SK-N-SH (cell line): ENCODE measurements at regions of chr4 and their contacts with region 1.

Region 1: DNA sequence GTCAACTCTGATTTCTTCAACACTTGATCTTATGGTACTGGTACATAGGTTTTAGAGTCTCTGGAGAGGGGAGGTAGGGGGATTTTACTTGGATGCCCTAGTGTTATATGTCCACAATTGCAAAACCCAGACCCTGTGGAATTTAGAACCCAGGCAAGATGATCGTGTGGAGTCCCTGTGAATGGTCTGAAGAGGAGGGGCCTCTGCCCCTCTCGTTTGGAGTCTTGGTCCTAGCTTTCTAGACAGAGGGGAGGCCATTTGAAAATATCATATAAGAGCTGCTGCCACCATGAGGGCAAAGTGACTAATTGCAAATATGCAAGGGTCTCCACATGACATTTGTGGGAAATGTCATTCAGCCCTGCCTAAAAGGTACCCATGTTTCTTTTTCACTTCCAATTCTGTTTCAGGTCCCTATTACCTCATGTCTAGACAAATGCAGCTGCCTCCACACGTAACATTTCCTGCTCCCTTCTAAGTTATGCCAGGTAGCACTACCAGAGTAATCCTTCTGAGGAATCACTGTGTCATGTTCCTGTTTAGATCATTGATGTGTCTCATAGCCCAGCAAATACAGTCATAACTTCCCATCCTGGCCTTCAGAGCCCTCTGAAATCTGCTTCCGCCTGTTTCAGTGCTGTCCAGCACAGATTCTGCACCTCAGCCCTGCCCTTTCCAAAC is 126.8 kb downstream of the KLHL8 start:
- DNase-seq: peak; percentile 67
- H3K4me3 ChIP-seq: no peak overlapping the region
- H3K27ac ChIP-seq: peak overlapping the region in 1 of 2 experiments; percentile 47; a peak in 2 of 4 replicates
- H3K4me1 ChIP-seq: peaks cover 9 to 10% of the 10 kb centered on the region in 2 experiments; a peak in 3 of 4 replicates
- H3K27me3 ChIP-seq: no peaks in the 10 kb centered on the region
- CTCF ChIP-seq: peak; percentile 71
- EP300 ChIP-seq: no peak
- RAD21 ChIP-seq: peak; percentile 88

Region 2: GRCh38 chr4:86497980-86498862 is 595.4 kb before region 1 on chr4:
- CTCF ChIA-PET with region 1: interaction called, 13 read pairs
- POLR2A ChIA-PET with region 1: interaction called, 3 read pairs
- DNase-seq: peak; percentile 47
- H3K4me3 ChIP-seq: no peak overlapping the region; a peak in 1 of 4 replicates
- H3K27ac ChIP-seq: no peak overlapping the region
- H3K4me1 ChIP-seq: peaks cover 3 to 20% of the 10 kb centered on the region in 2 experiments; a peak in 3 of 4 replicates
- H3K27me3 ChIP-seq: no peaks in the 10 kb centered on the region
- CTCF ChIP-seq: peak; percentile 93
- EP300 ChIP-seq: no peak
- RAD21 ChIP-seq: peak; percentile 88

Region 3: DNA sequence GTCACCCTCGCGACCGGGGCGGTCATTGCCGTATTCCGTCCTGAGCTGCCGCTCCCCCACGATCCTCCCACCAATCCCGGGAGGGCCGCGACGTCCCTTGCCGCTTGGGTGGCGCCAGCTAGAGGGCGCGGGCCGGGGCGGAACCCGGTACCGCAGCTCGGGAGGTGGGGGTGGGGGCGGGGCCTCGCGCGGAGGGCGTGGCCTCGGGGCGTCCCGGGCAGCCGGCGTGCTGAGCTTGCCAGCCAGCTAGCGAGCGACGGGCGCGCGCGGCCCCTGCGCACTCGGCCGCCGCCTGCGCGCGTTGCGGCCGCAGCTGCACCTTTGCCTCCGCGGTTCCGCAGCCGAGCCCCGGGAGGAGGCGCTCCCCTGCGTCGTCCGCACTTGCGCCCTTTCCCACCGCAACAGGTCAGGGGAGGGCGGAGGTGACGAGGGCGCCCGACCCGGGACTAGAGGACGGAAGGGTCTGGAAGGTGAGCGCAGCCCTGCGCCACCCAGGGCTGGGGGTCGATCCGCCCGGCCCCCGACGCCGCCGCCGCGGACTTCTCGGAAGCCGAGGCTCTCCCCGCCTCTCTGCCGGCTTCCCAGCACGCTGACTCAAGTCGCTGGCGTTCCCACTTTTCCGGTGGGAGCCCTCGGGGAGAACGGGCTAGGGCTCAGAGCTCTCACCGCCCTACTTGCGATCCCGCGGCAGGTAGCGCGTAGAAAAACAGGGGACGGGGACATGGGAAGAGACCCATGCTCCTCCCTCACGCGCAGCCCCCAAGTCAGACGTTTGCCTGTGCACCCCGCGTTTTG is 158.6 kb before region 1 on chr4 and contains the start of gene AFF1:
- CTCF ChIA-PET with region 1: interaction called, 23 read pairs
- POLR2A ChIA-PET with region 1: no interaction called
- DNase-seq: peak; percentile 98
- H3K4me3 ChIP-seq: peak within 1 kb of the TSS; percentile 71 to 84
- H3K27ac ChIP-seq: peak within 1 kb of the TSS; percentile 77 to 78
- H3K4me1 ChIP-seq: peaks cover 4 to 11% of the 10 kb centered on the region in 2 experiments; a peak in 3 of 4 replicates
- H3K27me3 ChIP-seq: no peaks in the 10 kb centered on the region
- CTCF ChIP-seq: peak; percentile 38
- EP300 ChIP-seq: no peak
- RAD21 ChIP-seq: peak; percentile 9
- polyA plus RNA-seq, gene AFF1: 2.2 and 2.7 TPM in 2 replicates

Region 4: GRCh38 chr4:87068583-87069021 is 25.0 kb before region 1 on chr4:
- CTCF ChIA-PET with region 1: interaction called, 14 read pairs
- POLR2A ChIA-PET with region 1: no interaction called
- DNase-seq: peak; percentile 46
- H3K4me3 ChIP-seq: no peak overlapping the region; a peak in 1 of 4 replicates
- H3K27ac ChIP-seq: 0 out of 4 replicates have a peak overlapping the region, but pooled peaks of 1 of the 2 experiments have one; percentile 17
- H3K4me1 ChIP-seq: peaks cover 0 to 20% of the 10 kb centered on the region in 2 experiments; a peak in 2 of 4 replicates
- H3K27me3 ChIP-seq: no peaks in the 10 kb centered on the region
- CTCF ChIP-seq: no peak
- EP300 ChIP-seq: no peak
- RAD21 ChIP-seq: 0 out of 2 replicates have a peak, but pooled peaks have one; percentile 1

Region 5: GRCh38 chr4:87103691-87104187 is 10.2 kb after region 1 on chr4:
- CTCF ChIA-PET with region 1: interaction called, 15 read pairs
- POLR2A ChIA-PET with region 1: no interaction called
- DNase-seq: no peak
- H3K4me3 ChIP-seq: peak overlapping the region in 1 of 2 experiments; percentile 17; a peak in 1 of 4 replicates
- H3K27ac ChIP-seq: peak overlapping the region; percentile 62 to 95; a peak in 3 of 4 replicates
- H3K4me1 ChIP-seq: peaks cover 12 to 22% of the 10 kb centered on the region in 2 experiments
- H3K27me3 ChIP-seq: no peaks in the 10 kb centered on the region
- CTCF ChIP-seq: no peak
- EP300 ChIP-seq: 0 out of 4 replicates have a peak, but pooled peaks of 1 of the 2 experiments have one; percentile 16
- RAD21 ChIP-seq: no peak

Region 6: DNA sequence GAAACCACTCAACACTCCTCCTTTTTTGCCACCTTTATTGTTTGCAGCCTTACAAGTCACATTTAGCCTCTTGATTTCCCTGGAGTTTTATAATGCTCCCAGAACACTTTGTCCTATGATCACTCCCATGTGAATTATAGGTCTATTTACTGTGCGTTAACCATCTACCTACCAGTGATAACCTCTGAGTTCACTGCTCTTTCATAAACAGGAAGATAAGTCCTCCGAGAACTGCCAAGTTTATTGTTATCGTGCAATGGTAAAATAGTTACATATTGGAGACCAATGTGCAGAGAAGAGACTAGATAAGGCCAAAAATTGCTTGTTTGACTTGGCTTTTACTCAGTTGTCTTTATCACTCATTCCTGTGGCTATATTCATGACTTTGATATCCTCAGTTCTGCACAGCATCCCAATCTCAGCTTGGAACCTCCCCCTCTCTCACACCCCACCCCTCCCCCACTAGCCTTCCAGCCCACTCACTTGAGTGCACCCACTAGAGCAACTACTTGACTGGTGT is 315.9 kb after region 1 on chr4:
- CTCF ChIA-PET with region 1: no interaction called
- POLR2A ChIA-PET with region 1: no interaction called
- DNase-seq: no peak
- H3K4me3 ChIP-seq: no peak overlapping the region
- H3K27ac ChIP-seq: no peak overlapping the region
- H3K4me1 ChIP-seq: no peaks in the 10 kb centered on the region
- H3K27me3 ChIP-seq: no peaks in the 10 kb centered on the region
- CTCF ChIP-seq: no peak
- EP300 ChIP-seq: no peak
- RAD21 ChIP-seq: no peak